ENCODE measurements at regions of chr11 and their contacts with region 1.

Region 1: GRCh38 chr11:122655527-122656072 is at the start of gene UBASH3B:
- DNase-seq: peak; percentile 76
- H3K4me3 Mint-ChIP-seq: peak within 1 kb of the TSS; percentile 81
- H3K27ac Mint-ChIP-seq: peak within 1 kb of the TSS; percentile 85
- H3K4me1 Mint-ChIP-seq: peaks cover 40% of the 10 kb centered on the region
- H3K27me3 Mint-ChIP-seq: peaks cover 4% of the 10 kb centered on the region
- total RNA-seq, gene UBASH3B: 18.8 to 20.8 TPM

Region 2: DNA sequence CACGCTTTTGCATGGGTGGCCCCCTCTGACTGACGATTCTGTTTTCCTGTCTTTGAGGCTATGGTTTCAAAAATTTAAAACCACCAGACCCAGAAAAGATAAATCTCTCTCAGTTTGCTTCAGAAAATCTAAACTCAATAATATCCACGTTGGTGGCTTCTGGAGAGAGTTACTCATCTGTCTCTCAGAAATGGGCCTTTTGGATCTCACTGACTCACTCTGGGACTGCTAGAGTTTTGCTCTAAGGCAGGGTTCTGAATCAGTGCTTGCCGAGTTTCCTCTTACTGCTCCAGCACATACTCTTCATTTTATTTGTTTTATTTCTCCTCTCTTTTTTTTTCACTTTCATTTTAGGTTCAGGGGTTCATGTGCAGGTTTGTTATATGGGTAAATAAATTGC is 845.3 kb before region 1 on chr11:
- CTCF ChIA-PET with region 1: no interaction called
- POLR2A ChIA-PET with region 1: no interaction called
- intact Hi-C with region 1: no loop called
- DNase-seq: no peak
- H3K4me3 Mint-ChIP-seq: no peak overlapping the region
- H3K27ac Mint-ChIP-seq: no peak overlapping the region
- H3K4me1 Mint-ChIP-seq: no peaks in the 10 kb centered on the region
- H3K27me3 Mint-ChIP-seq: no peaks in the 10 kb centered on the region

Region 3: GRCh38 chr11:122617297-122617696 is 38.3 kb before region 1 on chr11:
- CTCF ChIA-PET with region 1: no interaction called
- POLR2A ChIA-PET with region 1: no interaction called
- intact Hi-C with region 1: no loop called
- DNase-seq: no peak
- H3K4me3 Mint-ChIP-seq: no peak overlapping the region
- H3K27ac Mint-ChIP-seq: no peak overlapping the region
- H3K4me1 Mint-ChIP-seq: no peaks in the 10 kb centered on the region
- H3K27me3 Mint-ChIP-seq: no peaks in the 10 kb centered on the region

Region 4: GRCh38 chr11:122668562-122669090 is 13.0 kb after region 1 on chr11:
- CTCF ChIA-PET with region 1: interaction called, 9 read pairs
- POLR2A ChIA-PET with region 1: interaction called, 5 read pairs
- intact Hi-C with region 1: loop called (anchors 1 kb)
- DNase-seq: peak; percentile 22
- H3K4me3 Mint-ChIP-seq: no peak overlapping the region
- H3K27ac Mint-ChIP-seq: peak overlapping the region; percentile 29
- H3K4me1 Mint-ChIP-seq: peaks cover 52% of the 10 kb centered on the region
- H3K27me3 Mint-ChIP-seq: no peaks in the 10 kb centered on the region

Region 5: DNA sequence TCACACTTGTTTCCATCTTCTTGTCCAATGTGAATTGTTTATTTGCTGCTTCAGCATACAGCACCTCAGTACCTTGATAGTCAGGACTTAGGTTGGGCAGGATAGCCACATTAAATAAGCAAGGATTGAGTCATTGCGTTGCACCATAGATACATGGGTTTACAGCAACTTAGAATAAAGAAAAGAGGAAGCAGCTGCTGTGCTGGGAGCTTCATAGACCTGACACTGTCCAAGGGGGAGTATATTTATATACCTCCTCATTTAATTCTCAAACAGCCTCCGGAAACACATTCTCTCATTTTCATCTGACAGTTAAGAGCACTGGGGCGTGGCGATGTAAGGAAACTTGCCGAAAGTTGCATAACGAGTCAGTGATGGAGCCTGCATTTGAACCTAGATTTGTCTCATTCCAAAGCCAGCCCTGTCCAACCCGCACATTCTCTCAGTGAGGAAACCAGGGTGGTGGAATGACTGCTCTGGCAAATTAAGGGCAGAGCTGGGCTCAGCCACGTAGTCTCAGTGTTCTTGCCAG is 42.1 kb after region 1 on chr11:
- CTCF ChIA-PET with region 1: interaction called, 13 read pairs
- POLR2A ChIA-PET with region 1: interaction called, 5 read pairs
- intact Hi-C with region 1: loop called (anchors 1 kb)
- DNase-seq: peak; percentile 65
- H3K4me3 Mint-ChIP-seq: peak overlapping the region; percentile 57
- H3K27ac Mint-ChIP-seq: peak overlapping the region; percentile 75
- H3K4me1 Mint-ChIP-seq: peaks cover 80% of the 10 kb centered on the region
- H3K27me3 Mint-ChIP-seq: no peaks in the 10 kb centered on the region

Region 6: DNA sequence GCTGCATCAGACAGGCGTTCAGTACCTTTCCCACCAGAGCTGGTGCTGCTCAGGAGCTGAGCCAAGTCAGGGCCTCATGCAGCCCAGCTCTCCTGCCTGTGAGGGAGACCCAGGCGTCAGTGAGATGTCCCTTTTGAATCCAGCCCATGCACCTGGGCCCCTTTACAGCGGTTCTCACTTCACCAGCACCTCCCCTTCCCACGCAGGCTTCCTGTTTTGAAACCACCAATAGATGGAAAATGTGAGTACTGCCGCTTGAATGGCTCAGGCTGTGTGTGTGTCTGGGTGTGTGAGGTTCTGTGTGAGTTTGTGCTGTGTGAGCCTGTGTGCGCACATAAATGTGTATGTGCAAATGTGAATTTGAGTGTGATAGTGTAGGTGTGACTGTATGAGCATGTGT is 88.3 kb after region 1 on chr11:
- CTCF ChIA-PET with region 1: interaction called, 136 read pairs
- POLR2A ChIA-PET with region 1: interaction called, 11 read pairs
- intact Hi-C with region 1: loop called (anchors 1 kb)
- DNase-seq: peak; percentile 91
- H3K4me3 Mint-ChIP-seq: no peak overlapping the region
- H3K27ac Mint-ChIP-seq: no peak overlapping the region
- H3K4me1 Mint-ChIP-seq: peaks cover 14% of the 10 kb centered on the region
- H3K27me3 Mint-ChIP-seq: no peaks in the 10 kb centered on the region

Region 7: DNA sequence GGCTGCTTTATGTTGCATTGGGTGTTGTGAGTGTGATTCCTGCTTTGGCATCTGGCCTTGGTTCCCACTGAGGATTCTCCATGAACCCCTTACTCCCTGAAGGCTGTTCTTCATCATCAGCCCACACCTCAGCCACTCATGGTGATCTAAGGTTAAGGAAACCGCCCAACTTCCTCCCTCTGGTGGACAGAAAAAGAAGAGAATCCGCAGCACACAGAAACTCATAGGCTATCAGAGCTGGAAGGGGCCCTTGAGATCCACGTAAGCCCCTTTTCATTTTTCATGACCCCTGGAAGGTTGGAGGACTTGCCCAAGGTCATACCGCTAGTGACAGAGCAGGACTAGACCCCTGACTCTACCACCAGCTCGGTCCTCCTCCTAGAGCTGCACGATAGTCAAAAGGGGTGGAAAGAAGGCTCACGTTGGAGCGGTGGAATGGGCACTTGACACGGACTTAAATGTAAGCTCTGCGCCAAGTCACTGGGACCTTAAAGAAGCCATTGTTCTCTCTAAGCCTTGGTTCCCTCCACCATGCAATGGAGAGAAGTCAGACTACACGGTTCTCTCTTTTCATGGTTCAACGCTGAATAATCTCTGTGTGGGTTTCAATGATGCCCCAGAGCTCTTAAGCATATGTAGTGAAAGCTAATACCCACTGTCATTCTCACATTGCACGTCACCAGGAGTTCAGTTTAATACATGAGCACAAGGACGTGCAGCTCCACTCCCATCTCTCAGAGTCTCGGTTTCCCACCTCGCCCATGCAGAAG is 99.1 kb after region 1 on chr11:
- CTCF ChIA-PET with region 1: interaction called, 136 read pairs
- POLR2A ChIA-PET with region 1: interaction called, 5 read pairs
- intact Hi-C with region 1: loop called (anchors 1 kb)
- DNase-seq: peak; percentile 42
- H3K4me3 Mint-ChIP-seq: no peak overlapping the region
- H3K27ac Mint-ChIP-seq: no peak overlapping the region
- H3K4me1 Mint-ChIP-seq: peaks cover 51% of the 10 kb centered on the region
- H3K27me3 Mint-ChIP-seq: no peaks in the 10 kb centered on the region

Region 8: DNA sequence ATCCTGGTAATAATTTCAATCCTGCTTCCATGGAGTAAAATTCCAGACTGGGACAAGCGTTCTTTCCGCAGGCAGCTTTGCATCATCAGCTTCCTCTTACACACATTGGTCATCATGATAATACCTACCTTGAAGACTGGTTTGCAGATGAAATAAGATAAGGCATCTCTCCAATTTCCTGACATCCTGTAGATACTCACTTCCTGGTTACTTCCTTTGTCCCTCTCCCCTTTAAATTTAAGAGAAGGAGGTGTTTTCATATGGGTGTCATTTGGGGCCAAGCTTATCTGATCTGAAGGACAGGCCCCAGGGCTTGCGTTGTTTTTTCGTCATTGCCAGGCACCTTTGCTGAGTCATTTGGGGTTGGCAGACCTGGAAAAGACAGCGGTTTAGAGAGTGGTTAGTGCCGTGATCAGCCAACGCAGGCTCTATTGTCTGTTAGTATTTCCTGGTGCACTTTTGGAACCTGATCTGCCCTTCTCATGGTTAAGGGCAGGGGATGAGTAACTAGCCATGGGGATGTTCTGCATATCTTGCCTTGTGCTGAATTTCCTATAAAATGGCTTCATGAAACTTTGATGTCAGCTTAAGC is 798.6 kb after region 1 on chr11:
- CTCF ChIA-PET with region 1: no interaction called
- POLR2A ChIA-PET with region 1: no interaction called
- intact Hi-C with region 1: loop called (anchors 10 kb)
- DNase-seq: peak; percentile 92
- H3K4me3 Mint-ChIP-seq: peak overlapping the region; percentile 74
- H3K27ac Mint-ChIP-seq: peak overlapping the region; percentile 97
- H3K4me1 Mint-ChIP-seq: peaks cover 82% of the 10 kb centered on the region
- H3K27me3 Mint-ChIP-seq: no peaks in the 10 kb centered on the region

Measured in activated CD4-positive, alpha-beta memory T cell treated with anti-CD3 and anti-CD28 coated beads for 36 hours (primary cell).